Esophagus squamous epithelium (tissue), 5 donors: ENCODE measurements at regions of chr17 and their contacts with region 1.

Region 1: GRCh38 chr17:57261084-57261461 is 4.8 kb downstream of the MSI2 start:
- DNase-seq: no peak
- H3K4me3 ChIP-seq: no peak overlapping the region
- H3K27ac ChIP-seq: no peak overlapping the region
- H3K4me1 ChIP-seq: peaks cover 7 to 32% (median 10%) of the 10 kb centered on the region in 3 donors
- H3K27me3 ChIP-seq: no peaks in the 10 kb centered on the region
- CTCF ChIP-seq: no peak
- POLR2A ChIP-seq: no peak

Region 2: GRCh38 chr17:57211543-57211942 is 49.5 kb before region 1 on chr17:
- intact Hi-C with region 1: no loop called
- DNase-seq: no peak
- H3K4me3 ChIP-seq: no peak overlapping the region
- H3K27ac ChIP-seq: no peak overlapping the region
- H3K4me1 ChIP-seq: peaks cover 0 to 39% (median 0%) of the 10 kb centered on the region in 3 donors
- H3K27me3 ChIP-seq: no peaks in the 10 kb centered on the region
- CTCF ChIP-seq: no peak
- POLR2A ChIP-seq: no peak

Region 3: DNA sequence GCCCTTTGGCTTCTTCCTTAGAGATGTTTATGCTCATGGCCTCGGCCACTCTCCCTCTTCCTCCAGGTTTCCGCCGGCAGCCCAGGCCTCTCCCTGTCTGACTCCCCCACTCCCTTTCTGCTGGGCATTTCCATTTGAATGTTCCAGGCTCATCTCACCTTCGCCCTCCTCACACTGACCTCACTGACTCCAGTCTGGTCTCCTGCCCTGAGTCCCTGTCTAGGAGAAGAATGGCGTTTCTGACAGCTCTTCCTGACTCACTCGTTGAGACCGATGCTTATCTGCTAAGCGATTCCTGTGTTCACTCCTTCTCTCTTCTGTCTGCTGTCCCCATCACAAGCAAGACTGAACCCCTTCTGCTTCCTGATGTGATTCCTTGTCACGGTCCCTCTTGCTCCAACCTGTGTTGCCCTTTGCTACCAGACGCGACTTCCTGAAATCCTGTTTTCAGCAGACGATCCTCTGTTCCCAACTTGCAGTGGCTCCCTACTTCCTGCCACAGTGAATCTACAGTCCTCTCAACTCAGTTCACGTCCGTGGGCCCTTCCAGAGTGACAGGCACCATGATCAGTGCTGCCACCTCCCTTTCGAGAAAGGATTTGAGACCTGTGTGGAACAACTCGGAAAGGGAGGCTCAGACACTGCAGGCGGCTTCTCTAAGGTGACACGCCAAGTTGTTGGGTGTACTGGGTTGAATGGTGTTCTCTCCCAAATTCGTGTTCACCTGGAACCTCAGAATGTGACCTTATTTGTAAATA is 171.6 kb after region 1 on chr17:
- intact Hi-C with region 1: loop called (anchors 10 kb)
- DNase-seq: no peak
- H3K4me3 ChIP-seq: no peak overlapping the region
- H3K27ac ChIP-seq: no peak overlapping the region
- H3K4me1 ChIP-seq: no peaks in the 10 kb centered on the region
- H3K27me3 ChIP-seq: no peaks in the 10 kb centered on the region
- CTCF ChIP-seq: no peak
- POLR2A ChIP-seq: no peak